ENCODE measurements at regions of chr4 and their contacts with region 1.

Region 1: DNA sequence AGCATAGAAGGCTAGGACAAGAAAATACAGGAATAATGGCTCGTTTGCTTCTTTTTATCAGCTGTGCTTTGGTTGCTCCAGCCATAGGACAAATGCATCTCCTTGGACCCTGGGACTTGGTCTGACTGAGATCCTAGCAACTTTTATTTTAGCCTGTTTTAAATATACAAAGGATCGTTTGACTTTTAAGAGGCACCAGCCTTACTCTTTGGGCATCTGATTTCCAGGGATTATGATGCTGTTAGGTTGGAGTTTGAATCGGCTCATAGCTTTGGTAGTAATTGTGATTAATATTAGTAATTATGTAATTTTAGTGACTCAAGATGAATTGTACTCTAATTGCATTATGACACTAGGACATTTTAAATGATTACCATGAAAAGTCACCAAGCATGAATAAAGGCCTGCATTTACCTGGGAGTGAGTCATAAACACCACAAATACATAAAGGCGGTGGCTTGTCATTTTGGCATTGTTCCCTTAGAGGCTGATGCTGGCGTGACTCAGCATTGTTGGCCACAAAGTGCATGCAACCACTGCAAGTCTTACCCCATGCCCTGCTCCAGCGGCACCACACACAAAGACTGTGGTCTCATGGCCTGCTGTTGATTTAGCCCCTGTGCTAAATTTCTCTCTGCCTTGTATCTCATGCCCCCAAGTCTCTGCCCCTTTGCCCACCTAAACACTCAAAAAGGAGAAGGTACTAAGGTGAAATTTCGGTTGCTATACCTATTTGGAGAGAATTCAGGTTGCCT is 12.4 kb downstream of the GPAT3 start:
- DNase-seq: peak; percentile 86
- H3K4me3 Mint-ChIP-seq: no peak overlapping the region
- H3K27ac Mint-ChIP-seq: peak overlapping the region; percentile 35
- H3K4me1 Mint-ChIP-seq: peaks cover 19% of the 10 kb centered on the region
- H3K27me3 Mint-ChIP-seq: no peaks in the 10 kb centered on the region

Region 2: DNA sequence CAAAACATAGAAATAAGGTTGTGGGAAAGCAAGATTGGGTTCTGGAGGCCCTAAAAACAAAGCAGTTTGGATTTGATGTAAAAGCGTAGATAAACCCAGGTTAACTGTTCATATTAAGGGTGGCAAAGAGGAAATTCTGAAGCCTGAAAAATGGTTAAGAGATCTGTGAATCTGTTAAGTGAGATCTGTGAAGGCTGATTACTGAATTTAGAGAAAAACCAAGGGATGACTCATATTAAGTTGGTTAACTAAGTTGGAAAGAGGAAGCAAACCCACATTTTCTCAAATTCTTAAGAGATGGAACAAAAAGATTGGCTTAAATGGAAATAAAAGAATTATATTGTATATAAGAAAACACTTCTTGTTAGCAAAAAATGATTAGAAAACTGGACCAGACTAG is 10.4 kb after region 1 on chr4:
- intact Hi-C with region 1: loop called (anchors 1 kb)
- DNase-seq: no peak
- H3K4me3 Mint-ChIP-seq: peak overlapping the region; percentile 46
- H3K27ac Mint-ChIP-seq: peak overlapping the region; percentile 64
- H3K4me1 Mint-ChIP-seq: peaks cover 24% of the 10 kb centered on the region
- H3K27me3 Mint-ChIP-seq: peaks cover 9% of the 10 kb centered on the region

Region 3: DNA sequence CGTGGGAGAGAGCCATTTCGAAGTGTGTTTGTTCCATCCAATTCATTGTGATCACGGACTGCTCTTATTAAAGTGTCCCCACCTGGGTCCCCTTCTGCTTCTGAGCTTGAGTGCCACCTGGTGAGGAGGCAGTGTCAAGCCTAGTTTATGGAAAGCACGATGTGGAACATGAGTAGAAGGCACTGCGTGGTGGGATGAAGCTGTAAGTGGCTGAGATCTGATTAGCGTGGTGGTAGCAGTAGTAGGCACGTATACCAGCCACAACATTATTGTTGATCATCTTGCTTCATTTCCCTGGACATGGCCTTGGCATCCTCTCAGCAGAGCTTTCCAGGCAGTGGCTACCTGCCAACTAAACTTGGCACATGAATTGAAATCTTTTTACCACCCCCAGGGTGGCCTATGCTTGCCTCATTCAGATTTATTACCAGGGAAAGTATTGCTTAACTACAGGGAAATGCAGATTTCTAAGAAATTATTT is 34.0 kb after region 1 on chr4:
- intact Hi-C with region 1: no loop called
- DNase-seq: no peak
- H3K4me3 Mint-ChIP-seq: no peak overlapping the region
- H3K27ac Mint-ChIP-seq: no peak overlapping the region
- H3K4me1 Mint-ChIP-seq: no peaks in the 10 kb centered on the region
- H3K27me3 Mint-ChIP-seq: peaks cover 7% of the 10 kb centered on the region

Region 4: GRCh38 chr4:84050015-84050414 is 501.7 kb after region 1 on chr4:
- intact Hi-C with region 1: no loop called
- DNase-seq: no peak
- H3K4me3 Mint-ChIP-seq: no peak overlapping the region
- H3K27ac Mint-ChIP-seq: no peak overlapping the region
- H3K4me1 Mint-ChIP-seq: no peaks in the 10 kb centered on the region
- H3K27me3 Mint-ChIP-seq: no peaks in the 10 kb centered on the region